Activated CD8-positive, alpha-beta T cell treated with anti-CD3 and anti-CD28 coated beads for 36 hours (primary cell): ENCODE measurements at regions of chr6 and their contacts with region 1.

Region 1: DNA sequence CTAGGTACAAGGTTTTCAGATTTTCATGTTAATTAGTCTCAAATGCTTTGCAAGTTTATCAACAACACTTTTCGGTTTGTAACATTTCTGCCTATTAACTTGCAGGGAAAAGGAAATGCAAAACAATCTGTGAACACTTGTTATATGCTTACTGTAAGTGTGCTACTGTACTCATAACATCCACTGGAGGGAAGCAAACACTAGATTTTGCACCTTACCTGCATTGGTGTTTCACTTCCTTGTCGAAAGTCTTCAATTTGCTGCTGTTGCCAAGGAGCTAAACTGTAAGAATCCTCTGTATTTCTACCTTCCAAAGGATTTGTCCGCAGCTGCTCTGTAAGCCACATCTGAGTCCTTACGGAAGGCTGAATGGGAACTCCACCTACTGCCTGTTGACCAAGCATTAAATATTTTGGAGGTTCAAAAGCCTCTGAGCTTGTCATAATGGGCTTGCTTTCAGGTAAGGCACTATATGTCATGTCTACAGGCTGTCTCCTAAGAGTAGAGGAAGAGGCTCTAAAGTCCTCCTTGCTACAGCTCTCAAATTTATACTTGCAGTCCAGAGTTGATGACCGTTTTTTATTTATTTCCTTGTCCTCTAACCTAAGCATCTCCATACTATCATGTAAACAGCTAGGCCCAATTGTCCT is 17.3 kb downstream of the PLN start:
- DNase-seq: peak; percentile 13
- ATAC-seq: peak; percentile 89
- H3K4me3 Mint-ChIP-seq: no peak overlapping the region
- H3K27ac Mint-ChIP-seq: peak overlapping the region; percentile 33
- H3K4me1 Mint-ChIP-seq: peaks cover 24% of the 10 kb centered on the region
- H3K27me3 Mint-ChIP-seq: no peaks in the 10 kb centered on the region
- CTCF ChIP-seq: peak; percentile 68

Region 2: DNA sequence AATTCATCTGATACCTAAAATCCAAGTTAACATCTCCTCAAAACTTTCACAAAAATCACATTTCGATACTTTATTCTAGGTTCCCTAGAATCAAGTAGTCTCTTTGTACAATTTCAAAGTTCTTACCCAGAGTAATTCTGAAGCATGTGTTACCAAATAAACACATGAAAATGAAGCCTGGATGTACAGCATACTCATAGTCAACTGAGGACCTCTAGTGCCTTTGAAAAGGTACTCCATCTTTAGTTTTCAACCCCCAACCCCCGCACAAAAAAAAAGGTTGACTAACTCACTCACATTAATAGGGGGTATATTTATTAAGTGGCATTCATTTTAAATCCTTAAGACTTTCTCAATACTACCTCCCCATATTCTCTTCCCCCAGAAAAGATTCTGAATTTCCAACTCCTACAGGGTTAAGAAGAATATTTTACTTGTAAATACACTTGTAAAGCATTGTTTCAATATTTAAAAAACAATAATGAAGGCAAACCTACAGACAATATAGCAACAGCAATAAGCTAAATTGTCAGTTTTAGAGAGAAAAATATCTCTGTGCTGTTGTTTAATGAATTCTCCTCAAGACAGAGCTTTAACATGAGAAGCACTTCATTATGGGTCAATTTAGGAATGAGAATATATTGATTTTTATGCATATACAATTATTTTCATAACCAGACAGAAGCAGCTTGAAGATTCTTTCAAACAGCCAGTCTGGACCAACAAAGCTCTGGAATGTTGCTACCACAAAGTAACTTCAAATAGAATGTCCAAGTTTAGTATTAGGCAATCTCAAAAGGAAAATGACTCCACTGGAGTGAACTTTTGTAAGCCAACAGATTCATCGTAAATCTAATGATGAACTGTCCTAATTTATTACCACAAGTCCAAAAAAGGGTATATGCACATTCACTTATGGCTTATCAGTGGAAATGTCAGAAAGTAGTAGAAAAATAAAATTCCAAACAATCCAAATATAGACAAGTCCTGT is 14.1 kb before region 1 on chr6:
- CTCF ChIA-PET with region 1: interaction called, 11 read pairs
- POLR2A ChIA-PET with region 1: no interaction called
- intact Hi-C with region 1: no loop called
- DNase-seq: peak; percentile 26
- ATAC-seq: peak; percentile 89
- H3K4me3 Mint-ChIP-seq: no peak overlapping the region
- H3K27ac Mint-ChIP-seq: peak overlapping the region; percentile 44
- H3K4me1 Mint-ChIP-seq: peaks cover 48% of the 10 kb centered on the region
- H3K27me3 Mint-ChIP-seq: no peaks in the 10 kb centered on the region
- CTCF ChIP-seq: peak; percentile 69

Region 3: DNA sequence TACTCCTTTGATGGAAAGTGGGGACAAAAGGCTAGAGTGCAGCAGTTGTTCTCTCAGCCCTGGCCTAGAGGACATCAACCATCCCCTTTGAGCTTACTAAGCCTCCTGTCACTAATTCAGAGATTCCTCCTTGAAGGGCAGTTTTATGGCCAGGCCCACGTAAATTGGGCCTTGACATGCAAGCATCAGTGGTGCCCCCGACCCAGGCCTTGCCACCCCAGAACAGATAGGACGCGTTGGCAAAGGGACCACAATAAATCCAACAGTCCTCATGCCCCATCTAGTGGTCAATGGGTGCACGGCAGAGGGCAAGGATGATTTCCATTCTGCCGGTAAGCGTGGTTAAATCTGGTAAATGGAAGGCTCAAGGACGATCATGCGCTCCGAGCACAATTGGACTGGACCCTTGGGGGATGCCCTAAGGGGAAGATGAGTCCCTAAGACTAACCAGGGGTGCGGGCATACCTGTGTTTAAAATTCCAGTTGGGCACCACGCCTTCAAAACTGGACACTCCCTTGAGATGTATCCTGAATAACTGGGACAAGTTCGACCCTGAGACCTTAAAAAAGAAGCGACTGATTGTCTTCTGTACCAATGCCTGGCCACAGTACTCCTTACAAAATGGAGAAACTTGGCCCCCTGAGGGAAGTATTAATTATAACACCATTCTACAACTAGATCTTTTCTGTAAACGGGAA is 53.4 kb after region 1 on chr6:
- CTCF ChIA-PET with region 1: interaction called, 13 read pairs
- POLR2A ChIA-PET with region 1: no interaction called
- intact Hi-C with region 1: loop called (anchors 2 kb)
- DNase-seq: peak; percentile 76
- ATAC-seq: peak; percentile 89
- H3K4me3 Mint-ChIP-seq: no peak overlapping the region
- H3K27ac Mint-ChIP-seq: peak overlapping the region; percentile 33
- H3K4me1 Mint-ChIP-seq: peaks cover 57% of the 10 kb centered on the region
- H3K27me3 Mint-ChIP-seq: no peaks in the 10 kb centered on the region
- CTCF ChIP-seq: peak; percentile 77

Region 4: GRCh38 chr6:118740372-118740771 is 174.9 kb after region 1 on chr6:
- CTCF ChIA-PET with region 1: no interaction called
- POLR2A ChIA-PET with region 1: no interaction called
- intact Hi-C with region 1: no loop called
- DNase-seq: no peak
- ATAC-seq: no peak
- H3K4me3 Mint-ChIP-seq: no peak overlapping the region
- H3K27ac Mint-ChIP-seq: no peak overlapping the region
- H3K4me1 Mint-ChIP-seq: peaks cover 39% of the 10 kb centered on the region
- H3K27me3 Mint-ChIP-seq: no peaks in the 10 kb centered on the region
- CTCF ChIP-seq: no peak

Region 5: GRCh38 chr6:118768904-118769325 is 203.5 kb after region 1 on chr6:
- CTCF ChIA-PET with region 1: interaction called, 11 read pairs
- POLR2A ChIA-PET with region 1: interaction called, 4 read pairs
- intact Hi-C with region 1: loop called (anchors 10 kb)
- DNase-seq: peak; percentile 71
- ATAC-seq: peak; percentile 82
- H3K4me3 Mint-ChIP-seq: peak overlapping the region; percentile 34
- H3K27ac Mint-ChIP-seq: peak overlapping the region; percentile 92
- H3K4me1 Mint-ChIP-seq: peaks cover 28% of the 10 kb centered on the region
- H3K27me3 Mint-ChIP-seq: no peaks in the 10 kb centered on the region
- CTCF ChIP-seq: no peak

Region 6: DNA sequence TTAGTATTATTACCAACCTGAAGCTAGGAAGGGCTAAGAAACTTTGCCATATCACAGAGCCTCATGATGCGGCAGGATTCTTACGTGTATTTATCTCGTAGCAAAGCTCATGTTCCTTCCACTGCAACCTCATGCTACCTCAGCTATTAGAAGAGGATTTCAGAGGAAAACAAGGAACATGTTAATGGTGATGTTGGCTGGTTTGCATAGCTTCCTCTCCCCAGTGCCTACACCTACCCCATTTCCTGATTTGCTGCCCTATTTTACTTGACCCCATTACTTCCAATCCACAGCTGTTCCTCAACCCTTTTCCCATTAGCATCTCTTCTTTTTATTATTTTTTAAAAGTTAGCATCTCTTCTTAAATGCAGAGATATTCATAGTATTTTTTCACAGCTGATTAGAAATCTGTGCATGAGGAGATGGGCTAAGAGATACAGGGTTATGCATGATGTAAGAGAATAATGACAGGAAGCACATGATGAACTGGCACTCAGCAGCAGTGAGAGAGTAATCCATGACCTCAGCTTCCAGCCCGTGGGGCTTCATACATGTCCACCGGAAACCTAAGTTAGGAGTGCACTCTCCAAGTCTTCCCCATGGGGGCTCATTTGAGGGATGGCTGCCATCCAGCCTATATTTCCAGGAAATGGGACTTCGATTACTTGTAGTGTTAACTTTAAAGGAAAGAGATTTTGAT is 222.4 kb after region 1 on chr6:
- CTCF ChIA-PET with region 1: interaction called, 10 read pairs
- POLR2A ChIA-PET with region 1: no interaction called
- intact Hi-C with region 1: no loop called
- DNase-seq: no peak
- ATAC-seq: peak; percentile 51
- H3K4me3 Mint-ChIP-seq: no peak overlapping the region
- H3K27ac Mint-ChIP-seq: peak overlapping the region; percentile 42
- H3K4me1 Mint-ChIP-seq: peaks cover 37% of the 10 kb centered on the region
- H3K27me3 Mint-ChIP-seq: no peaks in the 10 kb centered on the region
- CTCF ChIP-seq: no peak

Region 7: DNA sequence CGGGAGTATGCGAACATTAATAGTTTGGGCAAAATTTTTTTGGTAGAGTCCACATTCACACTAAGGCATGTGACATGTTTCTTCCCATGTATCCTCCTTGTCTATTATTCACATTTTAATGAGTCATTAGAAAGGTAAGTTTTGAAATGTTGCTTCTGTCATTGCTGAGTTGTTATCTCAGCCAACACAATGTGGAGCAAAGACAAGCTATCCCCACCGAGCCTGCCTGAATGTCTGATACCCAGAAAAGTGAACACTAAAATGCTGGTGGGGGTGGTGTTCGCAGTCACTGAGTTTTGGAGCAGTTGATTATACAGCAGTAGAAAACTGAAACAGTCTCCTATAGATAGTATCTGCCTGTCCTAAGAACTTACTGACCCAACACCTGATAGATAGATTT is 260.2 kb after region 1 on chr6:
- CTCF ChIA-PET with region 1: no interaction called
- POLR2A ChIA-PET with region 1: no interaction called
- intact Hi-C with region 1: no loop called
- DNase-seq: no peak
- ATAC-seq: no peak
- H3K4me3 Mint-ChIP-seq: no peak overlapping the region
- H3K27ac Mint-ChIP-seq: no peak overlapping the region
- H3K4me1 Mint-ChIP-seq: peaks cover 3% of the 10 kb centered on the region
- H3K27me3 Mint-ChIP-seq: no peaks in the 10 kb centered on the region
- CTCF ChIP-seq: no peak